ENCODE measurements at regions of chr10 and their contacts with region 1.

Region 1: DNA sequence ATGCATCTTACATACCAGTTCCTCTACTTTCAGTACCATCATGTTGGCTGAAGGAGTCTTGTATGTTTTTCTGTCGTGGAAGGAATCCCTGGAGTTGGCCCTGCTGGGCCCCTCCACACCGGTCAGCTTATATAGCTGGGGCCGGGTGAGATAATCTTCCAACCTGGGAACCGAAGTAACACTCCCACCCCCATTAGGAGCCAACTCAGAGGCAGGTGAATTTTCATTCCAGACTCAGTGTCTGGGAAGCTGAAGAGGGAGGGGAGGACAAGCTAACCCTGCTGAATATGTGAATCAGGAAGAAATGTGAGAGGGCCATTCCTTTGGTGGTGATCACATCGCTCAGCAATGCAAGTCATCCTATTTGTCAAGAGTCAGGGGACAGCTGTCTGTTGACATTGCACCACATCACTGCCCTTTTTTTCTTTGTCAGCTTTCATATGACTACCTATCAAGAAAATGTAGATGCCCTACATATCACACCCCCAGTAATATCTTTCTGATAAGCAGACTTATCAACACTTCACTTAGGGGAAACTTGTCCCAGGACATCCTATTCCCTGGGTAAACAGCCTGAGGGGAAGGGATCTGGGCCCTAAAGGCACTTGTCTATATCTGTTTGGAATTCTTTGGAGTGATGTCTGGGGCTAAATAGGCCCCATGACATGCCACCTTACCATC is at the start of gene ANKRD1:
- DNase-seq: peak in 4 of 5 donors; percentile 69 to 79 (median 70)
- ATAC-seq: peak; percentile 73 to 94 (median 90)
- H3K4me3 ChIP-seq: peak within 1 kb of the TSS; percentile 11 to 67 (median 57)
- H3K27ac ChIP-seq: peak within 1 kb of the TSS; percentile 72 to 97 (median 87)
- H3K4me1 ChIP-seq: peaks cover 0 to 11% (median 3%) of the 10 kb centered on the region in 12 donors
- H3K27me3 ChIP-seq: no peaks in the 10 kb centered on the region
- CTCF ChIP-seq: no peak
- POLR2A ChIP-seq: peak in 1 of 2 donors; percentile 58
- total RNA-seq, gene ANKRD1: 1,315 to 6,714 (median 4,181) TPM

Region 2: GRCh38 chr10:90969947-90970684 is 49.0 kb after region 1 on chr10:
- intact Hi-C with region 1: loop called in 4 of 10 experiments (anchors 5 to 10 kb)
- DNase-seq: no peak
- ATAC-seq: peak; percentile 48 to 72 (median 64)
- H3K4me3 ChIP-seq: peak overlapping the region in 3 of 12 donors; percentile 37 to 49 (median 40)
- H3K27ac ChIP-seq: peak overlapping the region; percentile 1 to 81 (median 56)
- H3K4me1 ChIP-seq: peaks cover 2 to 40% (median 14%) of the 10 kb centered on the region in 12 donors
- H3K27me3 ChIP-seq: no peaks in the 10 kb centered on the region
- CTCF ChIP-seq: peak in 4 of 12 donors; percentile 14 to 42 (median 27)
- POLR2A ChIP-seq: no peak

Region 3: DNA sequence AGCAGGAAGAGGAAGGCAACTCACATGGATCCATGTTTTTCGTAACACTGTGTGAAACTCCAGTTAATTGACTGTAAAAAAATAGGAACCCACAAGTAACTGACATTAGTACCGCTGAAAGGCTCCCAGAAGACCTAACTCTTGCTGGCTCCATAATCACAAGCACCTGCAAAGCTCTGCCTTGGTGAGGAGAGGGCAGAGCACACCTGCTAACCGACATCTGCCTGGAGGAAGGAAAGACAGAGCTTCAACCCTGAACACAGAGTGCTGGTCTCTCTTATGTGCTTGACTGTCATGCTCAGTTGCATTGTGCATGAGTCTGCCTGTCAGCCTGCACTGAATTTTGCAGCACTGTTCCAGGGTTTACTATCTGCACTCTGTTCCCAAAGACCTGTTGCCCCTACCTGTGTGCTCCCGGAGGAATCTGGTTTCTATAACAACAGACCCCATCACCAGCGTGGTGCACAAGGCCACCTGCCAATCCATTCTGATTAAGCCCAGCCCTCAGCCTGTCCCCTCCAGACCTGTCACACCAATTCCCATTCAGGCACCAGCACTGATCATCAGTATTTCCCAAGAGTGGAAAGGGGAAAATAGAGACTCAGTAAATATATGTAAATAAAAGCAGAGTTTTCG is 62.9 kb after region 1 on chr10:
- intact Hi-C with region 1: loop called in 5 of 10 experiments (anchors 1 to 10 kb)
- DNase-seq: no peak
- ATAC-seq: no peak
- H3K4me3 ChIP-seq: no peak overlapping the region
- H3K27ac ChIP-seq: peak overlapping the region in 8 of 12 donors; percentile 72 to 89 (median 82)
- H3K4me1 ChIP-seq: peaks cover 0 to 37% (median 14%) of the 10 kb centered on the region in 12 donors
- H3K27me3 ChIP-seq: no peaks in the 10 kb centered on the region
- CTCF ChIP-seq: no peak
- POLR2A ChIP-seq: no peak

Region 4: GRCh38 chr10:91022924-91023699 is 102.0 kb after region 1 on chr10:
- intact Hi-C with region 1: no loop called
- DNase-seq: peak in 1 of 5 donors; percentile 25
- ATAC-seq: peak; percentile 39 to 76 (median 58)
- H3K4me3 ChIP-seq: no peak overlapping the region
- H3K27ac ChIP-seq: peak overlapping the region; percentile 26 to 73 (median 52)
- H3K4me1 ChIP-seq: peaks cover 0 to 38% (median 24%) of the 10 kb centered on the region in 12 donors
- H3K27me3 ChIP-seq: no peaks in the 10 kb centered on the region
- CTCF ChIP-seq: no peak
- POLR2A ChIP-seq: no peak

Region 5: DNA sequence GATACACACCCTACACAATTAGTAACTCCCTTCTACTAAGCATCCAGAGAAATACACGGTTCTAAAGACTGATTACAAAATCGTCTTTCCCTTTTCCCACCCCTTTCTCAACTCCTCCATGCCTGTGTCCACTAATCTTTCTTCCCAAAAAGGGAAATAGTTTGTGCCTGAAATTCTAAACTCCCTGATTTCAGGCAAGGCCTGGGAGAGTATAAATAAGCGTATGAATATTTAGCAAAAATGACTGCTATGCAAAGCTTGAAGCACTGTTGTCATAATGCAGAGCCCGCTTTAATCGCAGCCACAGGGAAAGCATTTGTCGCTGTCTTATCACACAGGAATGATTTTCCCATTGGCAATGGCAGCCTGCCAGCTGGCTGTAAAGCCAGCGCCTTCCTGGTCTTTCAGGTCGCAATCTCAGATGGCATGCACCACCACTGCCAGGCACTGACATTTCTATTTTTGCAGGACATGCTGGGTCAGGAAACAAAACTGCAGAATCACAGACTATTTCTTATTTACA is 156.5 kb after region 1 on chr10:
- intact Hi-C with region 1: loop called in 4 of 10 experiments (anchors 5 to 10 kb)
- DNase-seq: peak; percentile 83 to 93 (median 87)
- ATAC-seq: peak; percentile 90 to 95 (median 93)
- H3K4me3 ChIP-seq: peak overlapping the region in 1 of 12 donors; percentile 1
- H3K27ac ChIP-seq: peak overlapping the region; percentile 67 to 94 (median 82)
- H3K4me1 ChIP-seq: peaks cover 0 to 32% (median 17%) of the 10 kb centered on the region in 12 donors
- H3K27me3 ChIP-seq: no peaks in the 10 kb centered on the region
- CTCF ChIP-seq: no peak
- POLR2A ChIP-seq: no peak

Measured in heart left ventricle (tissue), 16 donors.